Posterior vena cava (tissue), 2 donors: ENCODE measurements at regions of chr7 and their contacts with region 1.

Region 1: GRCh38 chr7:93030605-93031225 is 87.1 kb downstream of the SAMD9 start:
- DNase-seq: no peak

Region 2: DNA sequence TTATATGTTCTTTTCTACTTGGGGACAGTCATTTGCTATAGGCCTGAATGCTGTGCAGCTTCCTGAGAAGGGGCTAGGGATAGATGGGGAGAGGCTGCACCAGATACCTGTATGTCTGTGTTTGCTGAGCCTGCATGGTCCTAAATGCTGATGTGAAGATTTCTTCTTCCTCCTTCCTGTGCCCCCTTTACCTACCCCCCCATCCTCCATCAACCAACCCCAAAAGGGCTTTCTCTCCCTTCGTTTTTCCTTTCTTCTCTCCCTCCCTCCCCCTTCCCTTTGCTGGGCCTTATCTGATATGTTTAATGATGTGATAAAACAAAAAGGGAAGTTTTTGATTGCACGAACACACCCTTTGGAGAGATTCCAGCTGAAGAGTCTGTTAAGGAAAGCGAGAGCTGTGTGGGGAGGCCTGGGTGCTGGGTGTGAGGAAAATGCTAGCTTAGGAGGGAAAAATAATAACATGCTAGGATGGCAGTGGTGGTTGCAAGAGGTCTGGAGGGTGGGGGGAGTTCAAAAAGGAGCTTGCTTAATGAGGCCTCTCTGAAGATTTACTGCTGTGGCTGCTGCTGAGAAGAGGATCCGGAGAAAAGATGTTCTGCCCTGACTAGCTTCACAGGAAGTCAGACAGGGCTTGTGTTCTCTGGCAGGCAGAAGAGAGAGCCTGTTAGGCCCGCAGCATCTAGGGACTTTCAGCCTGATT is 14.8 kb before region 1 on chr7:
- intact Hi-C with region 1: loop called in 1 of 2 experiments (anchors 2 kb)
- DNase-seq: no peak

Region 3: DNA sequence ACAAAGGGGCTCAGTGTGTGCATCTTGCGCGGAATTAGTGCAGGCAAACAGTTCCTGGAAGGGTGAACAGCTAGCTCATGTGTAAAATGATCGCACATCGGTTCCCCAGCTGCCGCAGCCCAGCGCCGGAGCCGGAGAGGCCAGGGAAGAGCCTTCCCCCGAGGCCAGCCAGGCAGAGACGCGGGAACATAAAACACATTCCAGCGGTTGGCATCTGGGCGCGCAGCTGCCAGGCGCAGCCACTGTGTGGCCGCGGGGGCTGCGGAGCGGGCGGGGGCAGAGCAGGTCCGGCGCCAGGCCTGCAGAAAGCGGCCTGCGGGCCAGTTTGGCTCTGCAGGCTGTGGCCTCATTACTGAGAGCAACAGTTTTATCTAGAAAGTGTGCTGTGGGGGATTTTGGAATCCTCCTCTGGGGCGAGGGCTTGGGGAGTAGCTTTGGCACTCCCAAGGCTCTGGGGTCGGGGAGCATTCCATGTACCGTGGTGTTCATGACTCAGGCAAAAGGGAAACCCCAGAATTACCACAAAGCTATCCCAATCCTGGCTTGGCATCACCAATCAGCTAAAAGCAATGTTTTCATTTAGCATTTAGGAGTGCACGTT is 12.8 kb after region 1 on chr7:
- intact Hi-C with region 1: no loop called
- DNase-seq: no peak